Heart right ventricle (tissue), 16 donors: ENCODE measurements at regions of chr1 and their contacts with region 1.

Region 1: GRCh38 chr1:24990779-24991641 is 60.9 kb upstream of the RUNX3 start:
- DNase-seq: no peak
- ATAC-seq: no peak
- H3K4me3 ChIP-seq: no peak overlapping the region
- H3K27ac ChIP-seq: peak overlapping the region in 1 of 10 donors; percentile 83
- H3K4me1 ChIP-seq: peaks cover 0 to 18% (median 0%) of the 10 kb centered on the region in 9 donors
- H3K27me3 ChIP-seq: peaks cover 0 to 51% (median 21%) of the 10 kb centered on the region in 7 donors
- CTCF ChIP-seq: no peak

Region 2: GRCh38 chr1:24923485-24924113 is 67.4 kb before region 1 on chr1:
- intact Hi-C with region 1: loop called in 1 of 10 experiments (anchors 2 kb)
- DNase-seq: no peak
- ATAC-seq: no peak
- H3K4me3 ChIP-seq: no peak overlapping the region
- H3K27ac ChIP-seq: peak overlapping the region in 1 of 10 donors; percentile 66
- H3K4me1 ChIP-seq: peaks cover 0 to 58% (median 5%) of the 10 kb centered on the region in 9 donors
- H3K27me3 ChIP-seq: peaks cover 20 to 74% (median 67%) of the 10 kb centered on the region in 7 donors
- CTCF ChIP-seq: no peak

Region 3: DNA sequence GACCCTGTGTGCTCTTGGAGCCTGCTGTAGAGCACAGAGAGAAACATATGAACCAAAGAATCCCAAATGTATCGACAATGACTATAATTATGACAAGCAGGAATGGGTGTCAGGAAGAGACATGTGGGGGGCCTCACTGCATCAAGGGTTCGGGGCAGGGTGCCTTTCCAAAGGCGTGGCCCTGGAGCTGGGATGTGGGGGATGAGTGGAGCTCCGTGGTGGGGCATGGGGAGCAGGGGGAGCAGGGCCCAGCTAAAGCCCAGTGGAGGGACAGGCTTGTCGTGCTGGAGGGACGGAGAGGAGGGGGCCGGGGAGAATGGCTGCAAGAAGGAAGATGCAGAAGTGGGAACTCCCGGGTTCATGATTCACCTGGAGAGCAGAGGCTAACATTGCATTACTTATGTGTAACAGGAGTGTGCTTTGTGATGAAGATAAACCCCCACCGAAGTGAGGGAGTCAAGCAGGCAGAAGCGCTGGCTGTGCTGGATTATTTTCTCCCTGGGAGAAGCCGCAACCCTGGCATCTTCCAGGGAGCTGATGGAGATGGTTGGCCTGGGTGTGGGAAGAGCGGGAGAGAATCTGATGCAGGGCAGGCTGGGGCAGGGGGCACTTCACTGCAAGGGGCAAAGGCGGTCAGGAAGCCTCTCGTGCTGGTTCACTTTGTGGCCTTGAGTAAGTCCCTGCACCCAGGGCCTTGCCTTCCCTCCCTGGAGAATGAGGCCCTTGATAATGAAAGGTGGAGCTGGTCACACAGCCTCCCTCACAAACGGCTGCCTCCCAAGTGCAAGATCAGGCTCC is 63.7 kb after region 1 on chr1:
- intact Hi-C with region 1: loop called in 1 of 10 experiments (anchors 2 kb)
- DNase-seq: no peak
- ATAC-seq: no peak
- H3K4me3 ChIP-seq: no peak overlapping the region
- H3K27ac ChIP-seq: no peak overlapping the region
- H3K4me1 ChIP-seq: peaks cover 0 to 2% (median 0%) of the 10 kb centered on the region in 9 donors
- H3K27me3 ChIP-seq: peaks cover 0 to 54% (median 37%) of the 10 kb centered on the region in 7 donors
- CTCF ChIP-seq: no peak